ENCODE measurements at regions of chr4 and their contacts with region 1.

Region 1: DNA sequence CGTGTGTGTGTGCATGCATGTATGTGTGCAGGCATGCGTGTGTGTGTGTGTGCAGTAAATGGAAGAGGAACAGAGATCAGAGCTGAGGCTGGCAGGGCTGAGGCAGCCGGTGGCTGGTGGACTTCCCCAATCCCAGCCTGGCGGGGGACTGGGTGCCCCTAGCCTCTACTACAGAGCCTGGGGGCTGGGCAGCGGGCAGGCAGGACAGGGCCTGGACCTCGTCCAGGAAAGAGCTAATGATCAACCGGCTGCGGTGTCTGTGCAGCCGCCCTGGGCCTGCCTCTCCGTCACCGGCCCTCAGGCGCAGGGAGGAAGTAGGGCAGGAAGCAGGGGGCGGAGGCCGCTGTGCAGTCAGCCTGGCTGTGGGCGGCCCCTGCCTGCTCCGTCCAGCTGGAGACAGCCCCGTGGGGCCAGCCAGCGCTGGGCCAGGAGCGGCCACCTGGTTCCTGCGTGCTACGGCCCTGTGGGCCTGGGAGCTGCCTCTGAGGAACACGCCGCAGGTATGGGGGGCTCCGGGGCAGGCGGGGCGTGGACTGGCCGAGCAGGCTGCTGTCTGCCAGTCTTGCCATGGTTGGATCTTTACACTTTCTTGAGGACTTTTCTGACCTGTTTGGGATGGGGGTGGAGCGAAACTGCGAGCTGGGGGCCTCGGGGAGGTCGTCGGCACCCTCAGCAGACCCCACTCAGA is at the start of gene SH3TC1:
- DNase-seq: peak; percentile 77
- ATAC-seq: peak; percentile 96
- H3K4me3 Mint-ChIP-seq: peak within 1 kb of the TSS; percentile 79
- H3K27ac Mint-ChIP-seq: peak within 1 kb of the TSS; percentile 86
- H3K4me1 Mint-ChIP-seq: peaks cover 37% of the 10 kb centered on the region
- H3K27me3 Mint-ChIP-seq: no peaks in the 10 kb centered on the region
- total RNA-seq, gene SH3TC1: 6.3 to 7.3 TPM

Region 2: GRCh38 chr4:8209181-8209874 is 10.3 kb after region 1 on chr4:
- CTCF ChIA-PET with region 1: no interaction called
- POLR2A ChIA-PET with region 1: no interaction called
- DNase-seq: no peak
- ATAC-seq: no peak
- H3K4me3 Mint-ChIP-seq: no peak overlapping the region
- H3K27ac Mint-ChIP-seq: no peak overlapping the region
- H3K4me1 Mint-ChIP-seq: peaks cover 8% of the 10 kb centered on the region
- H3K27me3 Mint-ChIP-seq: no peaks in the 10 kb centered on the region

Region 3: DNA sequence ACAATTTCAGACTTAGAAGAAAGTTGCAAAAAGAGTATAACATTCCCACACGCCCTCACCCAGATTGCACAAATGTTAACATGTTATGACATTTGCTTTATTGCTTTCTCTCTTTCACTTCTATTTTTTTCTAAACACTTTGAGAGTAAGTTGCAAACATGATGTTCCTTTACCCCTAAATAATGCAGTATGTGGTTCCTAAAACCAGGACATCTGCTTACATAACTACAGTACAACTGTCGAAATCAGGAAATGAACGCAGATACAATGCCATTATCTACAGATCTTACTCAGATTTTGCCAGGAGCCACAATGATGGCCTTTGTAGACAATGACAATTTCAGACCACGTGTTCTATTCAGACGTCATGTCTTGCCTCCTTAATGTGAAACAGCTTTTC is 22.4 kb after region 1 on chr4:
- CTCF ChIA-PET with region 1: no interaction called
- POLR2A ChIA-PET with region 1: interaction called, 12 read pairs
- DNase-seq: no peak
- ATAC-seq: no peak
- H3K4me3 Mint-ChIP-seq: no peak overlapping the region
- H3K27ac Mint-ChIP-seq: peak overlapping the region; percentile 43
- H3K4me1 Mint-ChIP-seq: peaks cover 47% of the 10 kb centered on the region
- H3K27me3 Mint-ChIP-seq: no peaks in the 10 kb centered on the region

Measured in activated CD8-positive, alpha-beta T cell treated with anti-CD3 and anti-CD28 coated beads, Interleukin-2, amount 10 ng/mL, durations not matched to agents 7 days and 5 days (primary cell).